Activated CD4-positive, alpha-beta T cell treated with anti-CD3 and anti-CD28 coated beads for 36 hours (primary cell): ENCODE measurements at regions of chr2 and their contacts with region 1.

Region 1: GRCh38 chr2:73736855-73737779 is at the start of gene TPRKB:
- DNase-seq: peak; percentile 98
- ATAC-seq: peak; percentile 99
- H3K4me3 Mint-ChIP-seq: peak within 1 kb of the TSS; percentile 92
- H3K27ac Mint-ChIP-seq: peak within 1 kb of the TSS; percentile 94
- H3K4me1 Mint-ChIP-seq: peaks cover 14% of the 10 kb centered on the region
- H3K27me3 Mint-ChIP-seq: no peaks in the 10 kb centered on the region
- total RNA-seq, gene TPRKB: 23.3 to 35.3 TPM

Region 2: DNA sequence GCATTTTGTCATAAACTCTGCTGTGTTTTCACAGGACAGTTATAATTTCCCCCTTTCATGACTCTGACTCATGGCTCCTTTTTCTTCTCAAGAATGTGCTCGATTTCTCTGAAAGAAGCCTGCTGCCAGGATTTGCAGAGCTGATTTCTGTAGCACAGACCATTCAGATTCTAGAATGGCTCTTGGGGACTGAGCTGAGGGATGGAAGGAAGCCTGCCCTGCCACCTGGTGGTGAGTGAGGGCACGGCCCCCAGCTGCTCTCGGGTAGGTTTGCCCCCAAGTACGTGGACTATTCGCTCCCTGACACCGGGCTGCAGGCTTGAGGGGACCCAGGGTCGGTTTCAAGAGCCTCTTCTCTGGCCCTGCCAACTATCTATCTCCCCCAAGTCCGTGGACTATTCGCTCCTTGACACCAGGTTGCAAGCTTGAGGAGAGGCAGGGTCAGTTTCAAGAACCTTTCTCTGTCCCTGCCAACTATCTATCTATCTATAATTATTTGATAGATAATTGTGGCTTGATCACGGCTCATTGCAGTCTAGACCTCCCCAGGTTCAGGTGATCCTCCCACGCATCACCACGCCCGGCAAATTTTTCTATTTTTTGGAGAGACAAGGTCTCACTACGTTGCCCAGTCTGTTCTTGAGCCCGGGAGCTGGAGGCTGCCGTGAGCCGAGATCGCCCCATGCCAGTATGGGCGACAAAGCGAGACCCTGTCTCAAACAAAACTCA is 524.5 kb before region 1 on chr2:
- CTCF ChIA-PET with region 1: no interaction called
- POLR2A ChIA-PET with region 1: no interaction called
- intact Hi-C with region 1: loop called in 1 of 2 experiments (anchors 1 kb)
- DNase-seq: peak; percentile 89
- ATAC-seq: peak; percentile 79
- H3K4me3 Mint-ChIP-seq: no peak overlapping the region
- H3K27ac Mint-ChIP-seq: no peak overlapping the region
- H3K4me1 Mint-ChIP-seq: peaks cover 32% of the 10 kb centered on the region
- H3K27me3 Mint-ChIP-seq: peaks cover 7% of the 10 kb centered on the region

Region 3: DNA sequence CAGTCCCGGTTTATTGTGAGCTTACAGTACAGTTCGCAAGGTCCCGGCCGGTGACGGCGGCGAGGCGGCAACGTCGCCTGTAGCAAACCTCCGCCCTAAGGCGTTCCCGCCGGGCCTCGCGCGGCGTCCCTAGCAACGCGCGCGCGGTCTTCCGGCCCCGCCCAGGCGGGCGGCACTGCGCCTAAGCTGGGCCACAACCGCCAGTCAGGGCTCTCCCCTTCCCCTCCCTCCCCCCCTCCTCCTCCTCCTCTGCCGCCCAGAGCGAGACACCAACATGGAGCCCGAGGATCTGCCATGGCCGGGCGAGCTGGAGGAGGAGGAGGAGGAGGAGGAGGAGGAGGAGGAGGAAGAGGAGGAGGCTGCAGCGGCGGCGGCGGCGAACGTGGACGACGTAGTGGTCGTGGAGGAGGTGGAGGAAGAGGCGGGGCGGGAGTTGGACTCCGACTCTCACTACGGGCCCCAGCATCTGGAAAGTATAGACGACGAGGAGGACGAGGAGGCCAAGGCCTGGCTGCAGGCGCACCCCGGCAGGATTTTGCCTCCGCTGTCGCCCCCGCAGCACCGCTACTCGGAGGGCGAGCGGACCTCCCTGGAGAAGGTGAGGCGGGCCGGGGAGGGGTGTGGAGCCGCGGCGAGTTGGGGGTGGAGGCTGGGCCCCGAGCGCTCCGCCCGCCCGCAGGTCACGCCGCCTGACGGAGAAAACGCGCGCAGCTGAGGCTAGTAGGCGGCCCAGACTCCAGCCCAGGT is 351.3 kb before region 1 on chr2 and contains the start of gene ALMS1:
- CTCF ChIA-PET with region 1: no interaction called
- POLR2A ChIA-PET with region 1: interaction called, 3 read pairs
- intact Hi-C with region 1: loop called in 1 of 2 experiments (anchors 1 kb)
- DNase-seq: peak; percentile 94
- ATAC-seq: peak; percentile 89
- H3K4me3 Mint-ChIP-seq: peak within 1 kb of the TSS; percentile 91
- H3K27ac Mint-ChIP-seq: peak within 1 kb of the TSS; percentile 91
- H3K4me1 Mint-ChIP-seq: peaks cover 27% of the 10 kb centered on the region
- H3K27me3 Mint-ChIP-seq: no peaks in the 10 kb centered on the region
- total RNA-seq, gene ALMS1: 19.2 to 24.0 TPM

Region 4: GRCh38 chr2:73566288-73566878 is 170.7 kb before region 1 on chr2:
- CTCF ChIA-PET with region 1: no interaction called
- POLR2A ChIA-PET with region 1: no interaction called
- intact Hi-C with region 1: no loop called
- DNase-seq: no peak
- ATAC-seq: no peak
- H3K4me3 Mint-ChIP-seq: no peak overlapping the region
- H3K27ac Mint-ChIP-seq: no peak overlapping the region
- H3K4me1 Mint-ChIP-seq: no peaks in the 10 kb centered on the region
- H3K27me3 Mint-ChIP-seq: no peaks in the 10 kb centered on the region

Region 5: DNA sequence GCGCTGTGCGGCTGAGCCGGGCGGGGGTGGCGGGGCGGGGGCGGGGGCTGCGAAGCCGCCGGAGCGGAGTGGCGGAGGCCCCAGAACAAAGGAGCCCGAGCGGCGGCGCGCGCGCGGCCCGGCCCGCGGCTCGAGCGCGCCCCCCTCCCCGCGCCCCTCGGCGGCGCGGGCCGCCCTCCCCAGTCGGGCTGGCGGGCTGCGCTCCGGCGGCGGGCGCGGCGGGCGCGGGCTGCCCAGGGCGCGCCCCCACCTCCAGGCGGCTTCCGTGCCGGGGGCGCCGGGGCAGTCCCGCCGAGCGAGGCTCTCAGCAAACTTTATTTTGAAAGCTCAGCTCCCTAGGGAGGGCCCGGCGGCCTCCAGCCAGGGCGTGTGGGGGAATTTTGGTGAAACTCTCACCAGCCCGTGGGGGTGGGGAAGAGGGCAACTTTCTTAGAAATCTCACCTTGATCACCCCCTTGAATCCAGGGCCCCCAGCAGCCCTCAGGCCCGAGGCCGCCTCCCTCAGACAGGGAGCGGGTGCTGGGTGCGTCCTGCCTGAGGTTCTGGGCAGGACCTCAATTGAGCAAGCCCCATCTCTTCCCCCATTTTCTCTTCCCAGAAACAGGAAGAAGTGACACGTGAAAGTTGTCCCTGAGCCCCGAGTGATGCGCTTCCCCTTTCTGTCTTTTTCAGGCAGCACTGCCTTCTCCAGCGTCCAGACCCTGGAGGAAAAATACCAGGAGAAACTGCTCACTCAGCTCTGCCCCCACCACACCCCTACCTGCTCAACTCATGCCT is 248.4 kb after region 1 on chr2:
- CTCF ChIA-PET with region 1: no interaction called
- POLR2A ChIA-PET with region 1: interaction called, 3 read pairs
- intact Hi-C with region 1: loop called in 1 of 2 experiments (anchors 2 kb)
- DNase-seq: peak; percentile 83
- ATAC-seq: peak; percentile 47
- H3K4me3 Mint-ChIP-seq: peak overlapping the region; percentile 87
- H3K27ac Mint-ChIP-seq: peak overlapping the region; percentile 73
- H3K4me1 Mint-ChIP-seq: peaks cover 71% of the 10 kb centered on the region
- H3K27me3 Mint-ChIP-seq: no peaks in the 10 kb centered on the region

Region 6: GRCh38 chr2:74198461-74199274 is 461.6 kb after region 1 on chr2 and contains the start of gene MTHFD2:
- CTCF ChIA-PET with region 1: no interaction called
- POLR2A ChIA-PET with region 1: interaction called, 4 read pairs
- intact Hi-C with region 1: loop called in 1 of 2 experiments (anchors 1 kb)
- DNase-seq: peak; percentile 96
- ATAC-seq: peak; percentile 90
- H3K4me3 Mint-ChIP-seq: peak within 1 kb of the TSS; percentile 100
- H3K27ac Mint-ChIP-seq: peak within 1 kb of the TSS; percentile 100
- H3K4me1 Mint-ChIP-seq: peaks cover 40% of the 10 kb centered on the region
- H3K27me3 Mint-ChIP-seq: no peaks in the 10 kb centered on the region
- total RNA-seq, gene MTHFD2: 411 to 453 TPM

Region 7: DNA sequence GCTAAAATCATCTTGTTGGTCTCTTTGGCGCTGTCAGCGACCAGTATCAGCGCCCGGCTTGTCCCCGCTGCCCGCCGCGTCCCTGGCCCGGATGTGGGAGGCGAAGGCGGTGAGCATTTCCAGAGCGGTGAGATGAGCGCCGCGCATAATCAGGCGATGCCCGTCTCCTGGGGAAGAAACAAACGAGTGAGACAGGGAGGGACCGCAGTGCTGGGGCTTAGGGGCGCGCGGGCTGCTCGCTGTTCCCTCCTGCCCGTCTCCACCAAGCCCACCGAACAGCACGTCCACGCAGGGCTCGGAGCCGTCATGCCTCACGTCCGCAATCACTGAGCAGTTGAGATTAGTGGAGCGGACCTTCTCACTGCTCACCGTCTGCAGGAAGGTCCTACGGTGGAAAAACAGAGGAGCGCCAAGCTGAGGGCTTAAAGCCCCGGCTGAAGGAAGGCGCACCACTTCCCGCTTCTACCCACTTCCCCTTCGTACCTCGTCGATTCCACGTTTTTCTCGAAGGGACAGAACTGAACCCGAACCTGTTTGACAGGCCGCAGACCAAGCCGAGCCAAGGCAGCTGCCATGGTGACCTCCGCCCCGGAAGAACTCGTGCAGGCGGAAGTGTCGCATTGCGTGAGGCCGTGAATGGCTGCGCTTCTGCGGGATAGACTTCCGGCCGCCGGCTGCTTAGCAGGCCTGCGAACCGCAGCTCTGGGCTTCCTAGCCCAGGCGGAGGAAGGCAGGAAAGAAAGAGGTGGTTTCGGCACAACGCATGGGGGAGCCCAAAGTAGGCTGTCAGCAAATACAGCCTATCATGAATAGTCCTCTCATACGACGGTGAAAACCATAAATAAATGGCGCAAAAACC is 735.2 kb after region 1 on chr2 and contains the start of gene MRPL53:
- CTCF ChIA-PET with region 1: no interaction called
- POLR2A ChIA-PET with region 1: no interaction called
- intact Hi-C with region 1: loop called in 1 of 2 experiments (anchors 2 kb)
- DNase-seq: peak; percentile 97
- ATAC-seq: peak; percentile 92
- H3K4me3 Mint-ChIP-seq: peak within 1 kb of the TSS; percentile 98
- H3K27ac Mint-ChIP-seq: peak within 1 kb of the TSS; percentile 93
- H3K4me1 Mint-ChIP-seq: peaks cover 21% of the 10 kb centered on the region
- H3K27me3 Mint-ChIP-seq: no peaks in the 10 kb centered on the region
- total RNA-seq, gene MRPL53: 87.4 to 88.5 TPM